GM12878 (cell line): ENCODE measurements at regions of chrX and their contacts with region 1.

Region 1: DNA sequence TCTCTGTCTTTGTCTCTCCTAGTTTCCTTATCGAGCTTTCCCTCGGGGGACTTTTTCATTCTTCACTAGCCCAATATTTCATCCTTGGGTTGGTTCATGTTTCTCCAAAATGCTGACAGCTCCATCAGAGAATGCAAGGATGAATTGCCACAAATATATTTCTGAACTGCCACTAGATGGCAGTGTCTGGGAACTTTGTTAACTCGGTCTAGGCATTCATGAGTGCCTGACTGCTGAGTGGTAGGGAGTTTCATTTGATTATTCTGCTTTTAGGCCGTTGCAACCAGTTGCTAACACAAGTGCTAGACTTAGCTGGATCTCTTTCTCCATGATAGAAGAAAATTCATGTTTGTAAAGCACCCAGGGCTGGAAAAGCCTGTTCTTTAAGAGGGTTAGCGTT is 73.5 kb upstream of the RAP2C start:
- DNase-seq: peak; percentile 19
- ATAC-seq: peak; percentile 90
- H3K4me3 ChIP-seq: no peak overlapping the region
- H3K27ac ChIP-seq: no peak overlapping the region
- H3K4me1 ChIP-seq: no peaks in the 10 kb centered on the region
- H3K27me3 ChIP-seq: no peaks in the 10 kb centered on the region
- CTCF ChIP-seq: peak; percentile 51 to 71 (median 57)
- EP300 ChIP-seq: no peak
- POLR2A ChIP-seq: no peak
- RAD21 ChIP-seq: peak; percentile 77

Region 2: DNA sequence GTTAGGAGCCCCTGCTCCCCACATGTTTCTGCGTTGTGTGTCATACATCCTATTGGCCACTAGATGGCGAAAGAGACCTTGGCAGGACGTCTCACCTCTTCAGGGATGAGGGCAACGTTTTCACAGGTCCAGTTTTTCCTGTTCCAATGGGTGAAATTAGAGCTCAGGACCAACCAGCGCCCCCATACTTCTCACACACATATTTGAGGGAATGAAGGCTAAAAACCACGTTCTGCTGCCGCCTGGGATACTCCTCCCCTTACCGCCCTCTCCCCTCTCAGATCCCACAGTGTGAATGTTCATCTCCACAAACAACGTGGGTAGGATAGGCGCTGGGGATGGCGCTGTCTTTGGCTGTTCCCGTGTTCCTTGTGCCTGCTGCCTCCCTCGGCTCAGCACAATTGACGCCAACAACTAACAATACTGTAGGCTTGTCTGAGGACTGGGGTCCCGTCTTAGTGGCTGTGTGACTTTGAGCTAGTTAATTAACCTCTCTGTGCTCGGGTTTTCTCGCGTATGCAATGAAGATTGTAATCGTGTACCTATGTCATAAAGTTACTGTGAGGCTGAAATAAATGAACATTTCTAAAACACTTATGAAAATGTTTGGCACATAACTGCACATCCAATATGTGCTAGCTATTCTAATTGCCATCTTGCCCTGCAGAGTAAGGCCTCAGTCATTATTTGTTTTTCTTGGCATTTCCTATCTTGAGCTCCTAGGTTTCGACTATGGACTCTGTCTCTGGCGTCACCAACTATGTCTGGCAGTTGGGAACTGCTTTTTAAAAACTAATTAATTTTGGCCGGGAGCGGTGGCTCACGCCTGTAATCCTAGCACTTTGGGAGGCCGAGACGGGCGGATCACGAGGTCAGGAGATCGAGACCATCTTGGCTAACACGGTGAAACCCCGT is 451.0 kb before region 1 on chrX:
- CTCF ChIA-PET with region 1: interaction called, 13 read pairs
- POLR2A ChIA-PET with region 1: no interaction called
- RAD21 ChIA-PET with region 1: interaction called, 3 read pairs
- SMC1A ChIA-PET with region 1: interaction called, 4 read pairs
- in situ Hi-C with region 1: no loop called
- intact Hi-C with region 1: no loop called
- DNase-seq: no peak
- ATAC-seq: peak; percentile 98
- H3K4me3 ChIP-seq: no peak overlapping the region
- H3K27ac ChIP-seq: no peak overlapping the region
- H3K4me1 ChIP-seq: no peaks in the 10 kb centered on the region
- H3K27me3 ChIP-seq: no peaks in the 10 kb centered on the region
- CTCF ChIP-seq: peak; percentile 85 to 90 (median 88)
- EP300 ChIP-seq: no peak
- POLR2A ChIP-seq: no peak
- RAD21 ChIP-seq: peak; percentile 96

Region 3: GRCh38 chrX:132226169-132226568 is 66.6 kb before region 1 on chrX:
- CTCF ChIA-PET with region 1: interaction called, 9 read pairs
- POLR2A ChIA-PET with region 1: no interaction called
- RAD21 ChIA-PET with region 1: interaction called, 11 read pairs
- SMC1A ChIA-PET with region 1: interaction called, 3 read pairs
- in situ Hi-C with region 1: no loop called
- intact Hi-C with region 1: no loop called
- DNase-seq: no peak
- ATAC-seq: no peak
- H3K4me3 ChIP-seq: no peak overlapping the region
- H3K27ac ChIP-seq: no peak overlapping the region
- H3K4me1 ChIP-seq: no peaks in the 10 kb centered on the region
- H3K27me3 ChIP-seq: no peaks in the 10 kb centered on the region
- CTCF ChIP-seq: peak in 1 of 3 experiments; percentile 37; a peak in 2 of 6 replicates
- EP300 ChIP-seq: no peak
- POLR2A ChIP-seq: no peak
- RAD21 ChIP-seq: peak; percentile 75

Region 4: DNA sequence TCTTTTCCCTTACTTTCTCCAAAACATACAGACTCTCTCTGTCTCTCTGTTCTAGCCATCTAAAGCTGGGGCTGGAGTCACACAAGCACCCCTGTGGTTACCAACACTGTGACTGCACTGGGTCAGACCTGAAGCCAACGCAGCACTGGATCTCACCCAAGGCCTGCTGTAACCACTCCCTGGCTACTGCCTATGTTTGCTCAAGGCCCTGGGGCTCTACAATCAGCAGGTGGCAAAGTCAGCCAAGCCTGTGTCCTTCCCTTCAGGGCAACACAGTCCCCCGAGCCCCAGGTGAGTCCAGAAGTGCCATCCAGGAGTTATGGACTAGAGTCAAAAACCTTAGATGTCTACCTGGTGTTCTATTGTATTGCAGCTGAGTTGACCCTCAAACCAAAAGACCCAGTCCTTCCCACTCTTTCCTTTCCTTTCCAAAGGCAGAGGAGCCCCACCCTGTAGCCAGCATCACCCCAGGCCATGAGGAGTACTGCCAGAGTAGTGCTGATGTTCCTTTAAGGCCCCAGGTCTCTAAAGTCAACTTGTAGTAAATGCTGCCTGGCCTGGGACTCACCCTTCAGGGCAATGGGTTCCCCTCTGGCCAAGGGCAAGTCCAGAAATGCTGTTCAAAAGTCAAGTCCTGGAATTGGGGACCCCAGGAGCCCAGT is 14.7 kb before region 1 on chrX:
- CTCF ChIA-PET with region 1: interaction called, 19 read pairs
- POLR2A ChIA-PET with region 1: no interaction called
- RAD21 ChIA-PET with region 1: interaction called, 3 read pairs
- SMC1A ChIA-PET with region 1: no interaction called
- in situ Hi-C with region 1: no loop called
- intact Hi-C with region 1: no loop called
- DNase-seq: no peak
- ATAC-seq: no peak
- H3K4me3 ChIP-seq: no peak overlapping the region
- H3K27ac ChIP-seq: no peak overlapping the region
- H3K4me1 ChIP-seq: no peaks in the 10 kb centered on the region
- H3K27me3 ChIP-seq: no peaks in the 10 kb centered on the region
- CTCF ChIP-seq: no peak
- EP300 ChIP-seq: no peak
- POLR2A ChIP-seq: no peak
- RAD21 ChIP-seq: no peak

Region 5: DNA sequence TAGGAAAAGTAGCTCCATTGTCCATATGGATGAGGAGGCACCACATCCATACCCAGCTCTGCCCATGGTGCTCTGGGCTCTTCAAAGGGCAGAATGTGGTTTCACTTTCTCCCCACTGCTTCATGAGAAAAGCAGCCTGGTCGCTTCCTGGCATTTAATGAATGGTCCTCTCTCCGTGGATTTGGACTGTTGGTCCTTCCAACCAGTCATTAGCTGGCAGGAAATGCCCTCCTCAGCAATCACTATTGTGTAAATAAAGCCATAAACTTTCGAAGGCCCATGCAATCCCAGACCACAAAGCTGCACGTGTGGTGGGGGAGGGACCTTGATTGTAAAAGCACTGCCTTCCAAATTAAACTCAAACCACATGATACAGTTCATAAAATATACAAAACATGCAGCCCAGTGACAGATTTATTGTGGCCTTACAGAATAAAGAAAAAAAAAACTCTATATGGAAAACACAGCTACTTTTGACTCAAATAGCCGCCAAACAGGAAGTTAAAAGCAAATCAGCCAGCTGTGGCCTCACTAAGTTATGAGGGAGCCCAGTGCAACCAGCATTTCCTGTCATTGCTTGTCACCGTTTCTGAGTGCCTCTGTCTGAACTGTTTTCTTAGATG is 187.9 kb after region 1 on chrX:
- CTCF ChIA-PET with region 1: interaction called, 11 read pairs
- POLR2A ChIA-PET with region 1: no interaction called
- RAD21 ChIA-PET with region 1: interaction called, 5 read pairs
- SMC1A ChIA-PET with region 1: interaction called, 3 read pairs
- in situ Hi-C with region 1: no loop called
- intact Hi-C with region 1: no loop called
- DNase-seq: peak; percentile 55
- ATAC-seq: peak; percentile 90
- H3K4me3 ChIP-seq: peak overlapping the region; percentile 64
- H3K27ac ChIP-seq: peak overlapping the region; percentile 89
- H3K4me1 ChIP-seq: peaks cover 7% of the 10 kb centered on the region; the same call in 1 of the 2 replicates
- H3K27me3 ChIP-seq: no peaks in the 10 kb centered on the region
- CTCF ChIP-seq: no peak
- EP300 ChIP-seq: peak in 1 of 2 experiments; percentile 1; a peak in 1 of 4 replicates
- POLR2A ChIP-seq: no peak
- RAD21 ChIP-seq: no peak

Region 6: DNA sequence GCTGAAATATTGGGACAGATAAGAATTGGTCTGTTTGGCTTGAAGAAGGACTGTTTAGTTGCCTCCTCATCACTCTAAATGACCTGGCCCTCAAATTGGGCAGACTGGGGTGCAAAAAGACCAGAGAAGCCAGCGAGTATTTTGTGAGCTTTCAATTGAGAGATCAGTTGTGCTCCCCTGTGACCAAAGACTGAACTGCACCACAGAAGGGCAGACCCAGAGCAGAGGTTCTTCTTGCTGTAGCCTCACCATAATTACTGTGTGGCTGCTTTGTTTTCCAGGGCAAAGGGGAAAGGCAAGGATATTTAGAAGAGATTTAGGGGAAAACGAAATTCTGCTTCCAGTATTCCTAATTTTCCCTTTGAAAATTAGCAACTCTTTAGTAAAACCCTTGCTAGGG is 300.1 kb after region 1 on chrX:
- CTCF ChIA-PET with region 1: interaction called, 21 read pairs
- POLR2A ChIA-PET with region 1: no interaction called
- RAD21 ChIA-PET with region 1: interaction called, 11 read pairs
- SMC1A ChIA-PET with region 1: interaction called, 9 read pairs
- in situ Hi-C with region 1: loop called (anchors 10 kb)
- intact Hi-C with region 1: loop called (anchors 5 kb)
- DNase-seq: no peak
- ATAC-seq: peak; percentile 76
- H3K4me3 ChIP-seq: no peak overlapping the region
- H3K27ac ChIP-seq: no peak overlapping the region
- H3K4me1 ChIP-seq: no peaks in the 10 kb centered on the region
- H3K27me3 ChIP-seq: no peaks in the 10 kb centered on the region; a peak in 1 of 4 replicates
- CTCF ChIP-seq: peak; percentile 42 to 52 (median 45); a peak in 4 of 6 replicates
- EP300 ChIP-seq: no peak
- POLR2A ChIP-seq: no peak
- RAD21 ChIP-seq: peak; percentile 70

Region 7: GRCh38 chrX:132631579-132632232 is 338.9 kb after region 1 on chrX:
- CTCF ChIA-PET with region 1: interaction called, 11 read pairs
- POLR2A ChIA-PET with region 1: no interaction called
- RAD21 ChIA-PET with region 1: interaction called, 6 read pairs
- SMC1A ChIA-PET with region 1: interaction called, 3 read pairs
- in situ Hi-C with region 1: no loop called
- intact Hi-C with region 1: loop called (anchors 5 kb)
- DNase-seq: no peak
- ATAC-seq: peak; percentile 80
- H3K4me3 ChIP-seq: no peak overlapping the region
- H3K27ac ChIP-seq: no peak overlapping the region
- H3K4me1 ChIP-seq: no peaks in the 10 kb centered on the region
- H3K27me3 ChIP-seq: no peaks in the 10 kb centered on the region
- CTCF ChIP-seq: peak; percentile 51 to 60 (median 58); a peak in 5 of 6 replicates
- EP300 ChIP-seq: no peak
- POLR2A ChIP-seq: no peak
- RAD21 ChIP-seq: peak; percentile 69